Sciatic nerve (tissue), 2 donors: ENCODE measurements at regions of chr7 and their contacts with region 1.

Region 1: GRCh38 chr7:27976531-27976930 is 204.1 kb downstream of the JAZF1 start:
- DNase-seq: no peak
- ATAC-seq: no peak

Region 2: DNA sequence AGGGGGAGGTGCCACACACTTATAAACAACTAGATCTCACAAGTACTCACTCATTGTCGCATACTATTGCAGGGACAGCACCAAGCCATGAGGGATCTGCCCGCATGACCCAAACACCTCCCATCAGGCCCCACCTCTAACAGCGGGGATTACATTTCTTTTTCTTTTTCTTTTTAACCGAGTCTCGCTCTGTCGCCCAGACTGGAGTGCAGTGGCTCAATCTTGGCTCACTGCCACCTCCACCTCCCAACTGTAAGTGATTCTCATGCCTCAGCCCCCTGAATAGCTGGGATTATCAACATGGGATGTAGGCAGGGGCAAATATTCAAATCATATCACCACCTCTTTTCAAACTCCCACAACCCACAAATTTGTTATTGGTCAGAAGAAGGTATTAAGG is 1188.8 kb before region 1 on chr7:
- intact Hi-C with region 1: no loop called
- DNase-seq: no peak
- ATAC-seq: no peak

Region 3: GRCh38 chr7:27603813-27604212 is 372.7 kb before region 1 on chr7:
- intact Hi-C with region 1: loop called (anchors 5 kb)
- DNase-seq: no peak
- ATAC-seq: no peak

Region 4: DNA sequence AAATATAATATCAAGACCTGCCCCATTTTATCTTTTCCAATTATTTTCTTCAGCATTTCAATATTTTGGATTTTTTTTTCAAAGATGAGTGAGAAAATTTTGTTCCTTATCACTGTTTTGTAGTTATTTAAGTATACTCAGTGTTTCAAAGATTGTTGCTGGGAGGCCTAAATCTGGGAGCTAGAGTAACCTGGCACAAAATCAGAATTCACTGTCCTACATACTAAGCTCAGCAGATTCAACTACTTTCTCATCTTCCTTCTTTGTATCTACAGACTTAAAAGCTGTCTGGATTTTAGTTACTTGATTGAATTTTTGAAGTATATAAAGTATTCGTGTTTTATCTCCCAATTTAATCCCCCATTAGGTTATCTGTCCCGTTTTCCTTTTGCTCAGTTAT is 150.6 kb before region 1 on chr7:
- intact Hi-C with region 1: no loop called
- DNase-seq: no peak
- ATAC-seq: no peak